ENCODE measurements at regions of chr1 and their contacts with region 1.

Region 1: DNA sequence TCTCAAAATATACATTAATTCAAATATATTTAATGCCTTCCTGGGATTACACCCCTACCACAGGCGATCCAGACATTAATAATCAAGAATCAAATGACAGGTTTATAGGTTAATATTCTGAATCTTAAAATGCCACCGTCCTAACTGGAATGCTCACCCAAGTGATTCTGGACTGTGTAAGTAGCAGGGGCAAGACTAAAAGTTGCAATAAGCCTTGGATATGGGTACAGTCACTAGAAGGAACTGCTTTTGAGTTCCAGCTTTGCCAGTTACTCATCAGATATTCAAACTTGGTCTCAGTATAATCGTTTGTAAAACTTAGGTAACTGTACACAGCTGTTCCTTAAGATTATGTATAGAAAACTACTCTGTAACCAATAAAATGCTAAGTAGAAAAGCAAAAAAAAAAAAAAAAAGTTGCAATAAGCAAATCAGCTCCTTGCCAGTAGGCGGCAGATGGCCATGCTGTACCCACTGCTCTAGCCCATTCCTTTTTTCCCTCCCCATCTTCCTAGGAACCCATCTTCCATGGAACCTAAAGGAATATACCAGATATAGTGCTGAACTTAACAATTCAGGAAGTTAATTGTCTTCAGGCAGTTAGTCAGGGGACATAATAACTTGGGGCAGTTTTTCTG is 10.5 kb downstream of the RO60 start:
- DNase-seq: peak; percentile 56 to 63 (median 60)
- ATAC-seq: peak; percentile 59
- H3K4me3 ChIP-seq: no peak overlapping the region
- H3K27ac ChIP-seq: peak overlapping the region; percentile 80; the same call in 2 of the 3 replicates
- H3K4me1 ChIP-seq: peaks cover 15 to 49% of the 10 kb centered on the region in 2 experiments
- H3K27me3 ChIP-seq: no peaks in the 10 kb centered on the region
- CTCF ChIP-seq: peak; percentile 67 to 81 (median 74)
- EP300 ChIP-seq: no peak
- POLR2A ChIP-seq: no peak
- RAD21 ChIP-seq: no peak; a peak in 1 of 4 replicates

Region 2: DNA sequence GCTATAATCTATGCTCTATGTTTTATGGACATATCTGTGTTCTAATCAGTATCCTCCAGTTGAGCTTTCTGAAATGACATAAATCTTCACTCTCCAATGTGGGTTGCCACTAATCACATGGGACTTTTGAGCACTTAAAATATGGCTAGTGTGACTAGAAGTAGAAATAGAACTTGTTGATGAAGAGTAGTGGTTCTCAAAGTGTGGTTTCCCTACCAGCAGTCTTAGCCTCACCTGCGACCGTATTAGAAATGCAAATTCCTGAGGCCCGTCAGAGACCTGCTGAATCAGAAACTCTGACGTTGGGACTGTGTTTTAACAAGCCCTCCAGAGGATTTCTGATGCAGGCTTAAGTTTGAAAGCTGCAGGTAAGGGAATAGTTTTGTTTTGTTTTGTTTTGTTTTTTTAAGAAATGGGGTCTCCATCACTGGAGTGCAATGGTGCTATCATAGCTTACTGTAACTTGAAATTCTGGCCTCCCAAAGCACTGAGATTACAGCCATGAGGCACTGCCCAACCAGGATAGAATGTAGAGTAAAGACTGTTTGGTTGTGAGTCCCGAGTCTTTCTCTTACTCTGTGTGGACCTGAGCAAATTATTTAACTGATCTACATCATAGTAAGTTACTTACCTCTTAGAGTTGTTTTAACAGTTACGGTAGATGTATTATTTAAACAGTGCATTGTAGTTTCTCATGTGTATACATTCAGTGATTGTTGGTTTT is 13.7 kb after region 1 on chr1:
- CTCF ChIA-PET with region 1: no interaction called
- POLR2A ChIA-PET with region 1: interaction called, 21 read pairs
- in situ Hi-C with region 1: no loop called
- intact Hi-C with region 1: loop called (anchors 2 kb)
- DNase-seq: no peak
- ATAC-seq: no peak; the same call in 2 of the 3 replicates
- H3K4me3 ChIP-seq: no peak overlapping the region
- H3K27ac ChIP-seq: no peak overlapping the region
- H3K4me1 ChIP-seq: no peaks in the 10 kb centered on the region
- H3K27me3 ChIP-seq: no peaks in the 10 kb centered on the region
- CTCF ChIP-seq: no peak
- EP300 ChIP-seq: no peak
- POLR2A ChIP-seq: no peak
- RAD21 ChIP-seq: no peak

Region 3: GRCh38 chr1:193104906-193105820 is 35.3 kb after region 1 on chr1 and contains the start of gene GLRX2:
- CTCF ChIA-PET with region 1: no interaction called
- POLR2A ChIA-PET with region 1: interaction called, 3 read pairs
- in situ Hi-C with region 1: no loop called
- intact Hi-C with region 1: loop called (anchors 2 kb)
- DNase-seq: peak; percentile 97 to 98 (median 98)
- ATAC-seq: peak; percentile 91
- H3K4me3 ChIP-seq: peak within 1 kb of the TSS; percentile 73
- H3K27ac ChIP-seq: peak within 1 kb of the TSS; percentile 79
- H3K4me1 ChIP-seq: peaks cover 10 to 18% of the 10 kb centered on the region in 2 experiments; a peak in 4 of 5 replicates
- H3K27me3 ChIP-seq: no peaks in the 10 kb centered on the region
- CTCF ChIP-seq: peak in 1 of 3 experiments; percentile 14; a peak in 2 of 6 replicates
- EP300 ChIP-seq: peak; percentile 42; the same call in 1 of the 2 replicates
- POLR2A ChIP-seq: peak; percentile 84
- RAD21 ChIP-seq: peak; percentile 24 to 45; a peak in 3 of 4 replicates
- polyA plus RNA-seq, gene GLRX2: 13.3 to 16.8 TPM

Region 4: GRCh38 chr1:193251950-193252349 is 182.1 kb after region 1 on chr1:
- CTCF ChIA-PET with region 1: no interaction called
- POLR2A ChIA-PET with region 1: no interaction called
- in situ Hi-C with region 1: no loop called
- intact Hi-C with region 1: no loop called
- DNase-seq: no peak
- ATAC-seq: no peak
- H3K4me3 ChIP-seq: no peak overlapping the region
- H3K27ac ChIP-seq: no peak overlapping the region
- H3K4me1 ChIP-seq: no peaks in the 10 kb centered on the region
- H3K27me3 ChIP-seq: no peaks in the 10 kb centered on the region
- CTCF ChIP-seq: no peak
- EP300 ChIP-seq: no peak
- POLR2A ChIP-seq: no peak
- RAD21 ChIP-seq: no peak